Dendritic cell treated with granulocyte-macrophage colony-stimulating factor and Interleukin-4, amounts not matched to agents 40 ng/mL and 50 ng/mL, for 4 days (primary cell): ENCODE measurements at regions of chr15 and their contacts with region 1.

Region 1: GRCh38 chr15:87675271-87675670 is 581.3 kb downstream of the NTRK3 start:
- H3K4me3 Mint-ChIP-seq: no peak overlapping the region
- H3K27ac Mint-ChIP-seq: no peak overlapping the region
- H3K4me1 Mint-ChIP-seq: no peaks in the 10 kb centered on the region
- H3K27me3 Mint-ChIP-seq: no peaks in the 10 kb centered on the region

Region 2: DNA sequence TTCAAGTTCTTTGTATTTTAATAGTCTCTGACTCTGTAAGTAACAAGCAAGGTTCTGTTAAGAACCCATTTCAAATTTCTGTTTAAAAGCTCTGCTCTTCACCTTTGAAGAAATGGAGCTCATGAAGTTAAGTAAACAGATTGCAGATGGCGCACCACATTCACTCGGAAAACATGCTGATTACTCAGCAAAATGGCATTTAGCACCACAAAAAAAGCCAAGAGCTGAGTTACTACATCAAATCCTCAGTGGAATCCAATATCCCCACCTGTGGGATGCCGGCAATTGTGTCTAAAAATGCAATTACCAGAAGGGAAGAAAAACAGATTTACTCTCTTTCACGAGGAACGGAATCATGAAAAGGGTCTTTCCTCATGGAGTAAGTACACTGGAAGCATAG is 176.7 kb before region 1 on chr15:
- intact Hi-C with region 1: no loop called
- H3K4me3 Mint-ChIP-seq: no peak overlapping the region
- H3K27ac Mint-ChIP-seq: no peak overlapping the region
- H3K4me1 Mint-ChIP-seq: no peaks in the 10 kb centered on the region
- H3K27me3 Mint-ChIP-seq: no peaks in the 10 kb centered on the region

Region 3: GRCh38 chr15:87653646-87654045 is 21.6 kb before region 1 on chr15:
- intact Hi-C with region 1: loop called (anchors 2 kb)
- H3K4me3 Mint-ChIP-seq: no peak overlapping the region
- H3K27ac Mint-ChIP-seq: no peak overlapping the region
- H3K4me1 Mint-ChIP-seq: no peaks in the 10 kb centered on the region
- H3K27me3 Mint-ChIP-seq: no peaks in the 10 kb centered on the region

Region 4: GRCh38 chr15:88187153-88187552 is 511.9 kb after region 1 on chr15:
- intact Hi-C with region 1: no loop called
- H3K4me3 Mint-ChIP-seq: no peak overlapping the region
- H3K27ac Mint-ChIP-seq: no peak overlapping the region
- H3K4me1 Mint-ChIP-seq: no peaks in the 10 kb centered on the region
- H3K27me3 Mint-ChIP-seq: no peaks in the 10 kb centered on the region